ENCODE measurements at regions of chr12 and their contacts with region 1.

Region 1: GRCh38 chr12:49296034-49296835 is 1.3 kb downstream of the PRPH start:
- DNase-seq: peak; percentile 82

Region 2: DNA sequence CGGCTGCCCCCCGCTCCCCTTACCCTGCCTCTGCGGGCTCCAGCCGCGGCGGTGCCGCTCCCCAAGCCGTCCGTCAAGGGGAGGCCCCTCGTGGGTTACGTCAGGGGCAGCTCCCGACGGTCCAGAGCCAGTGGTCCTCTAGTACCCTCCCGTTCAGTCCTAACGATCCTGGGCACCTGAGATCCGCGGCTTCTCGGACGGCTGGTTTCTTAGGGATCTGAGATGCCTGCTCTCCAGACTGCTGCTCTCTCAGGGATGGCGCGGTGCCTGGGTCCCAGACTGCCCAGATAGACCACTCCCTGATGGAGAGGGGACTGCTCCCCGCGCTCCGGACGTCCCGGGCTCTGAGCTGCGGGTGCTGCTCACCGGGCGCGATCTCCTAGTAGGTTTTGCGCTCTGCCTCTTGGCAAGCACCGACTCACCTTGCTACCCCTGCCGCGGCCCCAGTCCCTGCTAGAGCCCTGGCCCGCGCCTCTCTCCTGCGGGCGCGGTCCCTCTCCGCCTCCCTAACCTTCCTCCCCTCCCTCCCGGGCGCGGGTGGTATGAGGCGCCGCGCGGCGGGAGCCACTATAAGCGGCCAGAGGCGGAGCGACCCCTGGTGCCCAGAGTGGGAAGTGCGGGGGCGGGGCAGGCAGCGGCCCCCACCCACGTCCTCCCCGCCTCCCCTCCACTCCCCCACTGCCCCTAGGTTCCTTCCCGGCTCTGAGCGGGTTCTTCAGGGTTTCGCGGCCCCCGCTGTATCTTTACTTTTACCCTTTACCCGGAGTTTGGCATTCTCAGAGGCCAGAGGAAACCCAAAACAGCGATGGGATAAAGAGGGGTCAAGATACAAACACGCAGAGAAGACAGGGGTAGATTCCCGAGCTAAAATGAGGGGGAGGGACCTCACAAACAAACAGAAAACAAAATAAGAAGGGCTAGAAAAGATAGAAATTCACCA is 40.7 kb after region 1 on chr12 and contains the start of gene C1QL4:
- intact Hi-C with region 1: loop called in 1 of 2 experiments (anchors 5 kb)
- DNase-seq: peak; percentile 95
- total RNA-seq, gene C1QL4: not detected

Region 3: DNA sequence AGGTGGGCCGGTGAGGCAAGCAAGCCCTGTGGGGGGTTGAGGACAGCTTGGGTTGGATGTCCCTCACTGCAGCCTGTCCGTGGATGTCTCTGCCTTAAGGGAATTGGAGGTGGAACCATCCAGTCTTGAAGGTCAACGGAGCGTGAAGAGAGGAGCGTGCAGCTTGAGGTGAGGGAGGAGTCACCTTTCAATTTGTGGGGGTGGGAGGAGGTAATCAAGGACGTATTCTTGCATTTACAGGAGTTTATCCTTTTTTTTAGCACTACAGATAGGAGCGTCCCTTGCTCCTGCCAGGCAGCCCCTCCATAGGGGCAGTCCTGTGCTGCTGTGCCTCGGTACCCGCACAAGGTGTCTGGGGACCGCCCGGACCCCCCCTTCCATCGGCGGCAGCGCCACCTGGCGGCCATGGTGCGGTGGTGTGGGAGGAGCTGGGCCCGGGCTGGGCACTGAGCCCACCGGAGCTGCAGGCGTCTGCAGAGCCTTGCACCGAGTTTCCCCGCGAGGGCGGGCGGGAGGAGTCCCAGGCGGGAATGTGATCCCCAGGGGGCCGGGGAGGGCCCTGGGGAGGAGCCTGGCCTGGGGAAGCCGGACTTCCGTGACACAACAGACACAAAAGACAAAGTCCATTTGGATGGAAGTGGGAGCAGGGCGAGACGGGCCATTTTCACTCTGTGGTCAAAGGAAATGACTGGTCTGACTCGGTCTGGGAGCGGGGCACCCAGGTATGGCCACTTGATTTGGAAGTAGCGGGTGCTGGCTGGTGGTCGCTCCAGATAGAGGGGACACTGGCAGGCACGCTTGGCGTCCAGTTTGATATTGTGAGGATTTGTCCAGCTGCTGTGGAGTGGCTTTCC is 51.4 kb after region 1 on chr12:
- intact Hi-C with region 1: loop called in 1 of 2 experiments (anchors 5 kb)
- DNase-seq: peak; percentile 91

Measured in posterior vena cava (tissue), 2 donors.